ENCODE measurements at regions of chr22 and their contacts with region 1.

Region 1: DNA sequence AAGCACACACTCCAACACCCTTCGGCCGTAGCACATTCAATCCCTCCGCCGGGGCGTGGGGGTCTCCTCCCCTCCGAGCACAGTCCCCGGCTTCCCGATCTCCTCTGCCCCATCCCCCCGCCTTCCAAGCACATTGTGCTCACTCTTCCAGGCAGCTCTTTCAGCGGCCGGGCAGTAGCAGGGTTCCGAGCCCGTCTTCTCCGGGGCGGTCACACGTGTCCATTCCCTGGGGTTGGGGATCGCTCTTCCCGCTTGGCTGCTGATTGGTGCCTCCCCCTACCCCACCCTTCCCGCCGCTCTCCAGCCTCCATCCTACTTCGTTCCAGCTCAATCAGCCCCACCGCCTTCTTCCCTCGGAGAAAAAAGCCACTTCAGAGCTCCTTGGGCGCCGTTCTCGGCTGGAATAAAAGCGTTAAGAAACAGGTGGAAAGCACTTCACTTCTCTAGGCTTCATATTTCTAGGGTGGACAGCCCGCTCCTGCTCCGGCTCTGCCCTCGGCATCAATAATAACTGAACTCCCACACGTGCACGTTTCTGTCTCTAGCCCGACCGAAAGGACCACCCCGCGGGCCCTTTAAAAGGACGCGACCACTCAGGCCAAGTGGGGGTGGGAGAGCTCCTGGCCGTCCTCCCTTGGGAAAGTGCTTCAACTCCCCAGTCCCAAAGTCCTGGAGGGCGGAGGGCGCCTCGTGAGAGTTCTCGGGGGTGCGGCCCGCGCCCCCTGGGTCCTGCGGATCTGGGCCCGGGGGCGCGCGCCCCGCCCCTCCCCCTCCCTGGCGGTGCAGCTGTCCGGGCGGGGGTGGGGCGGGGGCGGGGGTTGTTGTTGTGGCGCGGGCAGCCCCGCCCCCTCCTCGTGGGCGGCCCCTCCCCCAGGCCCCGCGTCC is 464 bp upstream of the CECR2 start:
- DNase-seq: no peak
- H3K4me3 ChIP-seq: no peak overlapping the region
- H3K27ac ChIP-seq: no peak overlapping the region
- H3K4me1 ChIP-seq: peaks cover 13% of the 10 kb centered on the region
- H3K27me3 ChIP-seq: peaks cover 40 to 49% of the 10 kb centered on the region in 2 experiments
- CTCF ChIP-seq: no peak
- POLR2A ChIP-seq: no peak

Region 2: GRCh38 chr22:17084554-17085276 is 284.1 kb before region 1 on chr22 and contains the start of gene IL17RA:
- CTCF ChIA-PET with region 1: no interaction called
- POLR2A ChIA-PET with region 1: no interaction called
- dilution Hi-C with region 1: no loop called
- intact Hi-C with region 1: loop called (anchors 5 kb)
- DNase-seq: peak; percentile 85
- H3K4me3 ChIP-seq: peak within 1 kb of the TSS; percentile 62 to 65 (median 64)
- H3K27ac ChIP-seq: peak within 1 kb of the TSS; percentile 52
- H3K4me1 ChIP-seq: peaks cover 18% of the 10 kb centered on the region
- H3K27me3 ChIP-seq: no peaks in the 10 kb centered on the region
- CTCF ChIP-seq: no peak
- POLR2A ChIP-seq: peak; percentile 76
- total RNA-seq, gene IL17RA: 13.0 and 19.0 TPM in 2 replicates

Region 3: GRCh38 chr22:17411213-17411612 is 42.4 kb after region 1 on chr22:
- CTCF ChIA-PET with region 1: interaction called, 3 read pairs
- POLR2A ChIA-PET with region 1: no interaction called
- dilution Hi-C with region 1: no loop called
- intact Hi-C with region 1: loop called (anchors 2 kb)
- DNase-seq: no peak
- H3K4me3 ChIP-seq: no peak overlapping the region
- H3K27ac ChIP-seq: no peak overlapping the region
- H3K4me1 ChIP-seq: peaks cover 16% of the 10 kb centered on the region
- H3K27me3 ChIP-seq: no peaks in the 10 kb centered on the region
- CTCF ChIP-seq: no peak
- POLR2A ChIP-seq: no peak

Region 4: GRCh38 chr22:17477391-17477833 is 108.6 kb after region 1 on chr22:
- CTCF ChIA-PET with region 1: interaction called, 4 read pairs
- POLR2A ChIA-PET with region 1: no interaction called
- dilution Hi-C with region 1: no loop called
- intact Hi-C with region 1: loop called (anchors 5 kb)
- DNase-seq: no peak
- H3K4me3 ChIP-seq: peak overlapping the region in 1 of 3 experiments; percentile 10
- H3K27ac ChIP-seq: no peak overlapping the region
- H3K4me1 ChIP-seq: no peaks in the 10 kb centered on the region
- H3K27me3 ChIP-seq: peaks cover 11 to 22% of the 10 kb centered on the region in 2 experiments
- CTCF ChIP-seq: no peak
- POLR2A ChIP-seq: no peak